Body of pancreas (tissue), 4 donors: ENCODE measurements at regions of chr18 and their contacts with region 1.

Region 1: DNA sequence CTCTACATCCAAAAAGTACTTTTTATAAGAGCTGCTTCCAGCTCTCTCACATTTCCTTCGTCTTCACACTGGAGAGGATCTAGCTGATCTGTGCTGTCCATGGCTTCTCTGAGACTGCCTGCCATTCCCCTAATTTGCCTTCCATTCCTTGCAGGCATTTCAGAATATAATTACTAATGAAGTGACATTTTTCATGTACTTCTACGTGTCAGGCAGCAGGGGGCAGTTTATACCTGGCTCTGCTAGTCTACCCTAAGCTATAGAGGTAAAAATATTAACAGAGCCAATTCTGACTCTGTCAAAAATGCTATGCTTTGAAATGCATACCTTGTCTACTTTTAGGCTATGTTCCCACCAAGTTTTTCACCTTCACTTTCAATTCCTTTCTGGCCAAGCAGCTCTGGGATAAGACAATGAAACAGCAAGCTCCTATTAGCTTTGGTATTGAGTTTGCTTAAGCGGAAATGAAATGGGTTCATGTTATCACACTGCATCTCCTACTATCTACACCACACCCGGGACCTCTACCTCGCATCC is 81.9 kb downstream of the MEP1B start:
- DNase-seq: peak in 3 of 4 donors; percentile 18 to 53 (median 29)
- ATAC-seq: peak; percentile 87
- H3K4me3 ChIP-seq: no peak overlapping the region
- H3K27ac ChIP-seq: no peak overlapping the region
- H3K4me1 ChIP-seq: no peaks in the 10 kb centered on the region
- H3K27me3 ChIP-seq: no peaks in the 10 kb centered on the region
- CTCF ChIP-seq: peak; percentile 19 to 90 (median 75)
- POLR2A ChIP-seq: no peak

Region 2: DNA sequence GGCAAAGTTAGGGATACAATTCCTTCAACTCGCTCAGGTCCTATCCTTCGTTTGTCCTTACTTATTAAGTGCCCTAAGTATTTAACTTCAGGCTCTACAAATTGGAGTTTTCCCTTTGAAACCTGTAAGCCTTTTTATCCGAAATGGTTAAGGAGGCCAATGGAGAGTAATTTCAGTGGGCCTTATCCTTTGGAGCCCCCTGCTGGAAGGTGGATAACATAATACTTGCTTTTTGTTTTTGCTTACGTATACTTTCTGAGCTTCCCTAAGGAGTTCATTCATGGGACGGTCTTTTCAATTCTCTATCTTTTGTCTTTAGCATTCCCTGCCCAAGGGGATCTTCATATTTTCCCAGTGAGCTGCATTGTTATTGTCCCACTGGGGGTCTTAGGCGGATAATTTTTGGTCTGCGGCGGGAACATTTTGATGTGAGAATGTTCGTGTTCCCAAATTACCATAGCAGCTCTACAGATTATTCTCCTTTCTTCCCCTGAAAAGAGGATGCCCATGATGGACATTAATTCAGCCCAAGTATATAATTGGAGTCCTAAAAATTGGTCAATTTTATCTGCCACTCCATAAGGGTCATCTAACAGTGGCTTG is 294.4 kb before region 1 on chr18:
- intact Hi-C with region 1: no loop called
- DNase-seq: peak; percentile 18 to 45 (median 44)
- ATAC-seq: peak; percentile 71
- H3K4me3 ChIP-seq: no peak overlapping the region
- H3K27ac ChIP-seq: no peak overlapping the region
- H3K4me1 ChIP-seq: no peaks in the 10 kb centered on the region
- H3K27me3 ChIP-seq: no peaks in the 10 kb centered on the region
- CTCF ChIP-seq: peak in 6 of 7 experiments; percentile 44 to 74 (median 64)
- POLR2A ChIP-seq: no peak

Region 3: GRCh38 chr18:32470713-32471633 is 199.2 kb after region 1 on chr18 and contains the start of gene GAREM1:
- intact Hi-C with region 1: loop called (anchors 10 kb)
- DNase-seq: peak; percentile 97 to 98 (median 98)
- ATAC-seq: peak; percentile 92
- H3K4me3 ChIP-seq: peak within 1 kb of the TSS; percentile 77 to 91
- H3K27ac ChIP-seq: peak within 1 kb of the TSS; percentile 91 to 95 (median 92)
- H3K4me1 ChIP-seq: peaks cover 31% of the 10 kb centered on the region
- H3K27me3 ChIP-seq: no peaks in the 10 kb centered on the region
- CTCF ChIP-seq: peak; percentile 57 to 99 (median 71)
- POLR2A ChIP-seq: peak; percentile 94 to 99 (median 96)
- total RNA-seq, gene GAREM1: 16.1 to 16.8 TPM

Region 4: DNA sequence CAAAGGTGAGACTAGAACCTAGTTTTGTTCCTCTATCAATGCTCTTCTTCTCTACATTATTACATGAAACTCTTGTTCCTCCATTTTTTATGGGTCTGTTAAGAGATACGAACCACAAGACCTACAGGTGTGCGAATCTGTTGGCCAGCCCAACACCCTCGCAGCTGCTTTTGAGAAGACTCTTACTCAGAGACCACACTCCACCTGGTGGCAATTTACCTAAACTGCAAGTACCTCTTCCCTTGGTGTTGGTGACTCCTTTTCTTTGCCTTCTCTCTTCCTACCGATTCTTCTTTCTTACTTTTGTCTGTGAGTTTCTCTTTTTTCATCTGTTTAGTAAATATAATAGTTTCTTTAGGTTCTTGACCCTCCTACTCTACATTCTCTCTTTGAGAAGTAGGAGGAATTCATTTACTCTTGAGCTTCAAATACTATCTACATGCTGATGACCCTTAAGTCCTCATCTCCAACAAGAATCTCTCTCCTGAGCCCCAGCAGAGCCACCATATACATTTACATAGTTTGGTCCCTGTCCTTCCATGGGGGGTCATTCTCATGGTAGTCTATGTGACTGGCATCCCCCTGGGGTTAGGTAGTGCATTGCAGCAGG is 280.8 kb after region 1 on chr18:
- intact Hi-C with region 1: loop called (anchors 5 kb)
- DNase-seq: peak; percentile 78 to 86 (median 84)
- ATAC-seq: peak; percentile 84
- H3K4me3 ChIP-seq: no peak overlapping the region
- H3K27ac ChIP-seq: no peak overlapping the region
- H3K4me1 ChIP-seq: no peaks in the 10 kb centered on the region
- H3K27me3 ChIP-seq: no peaks in the 10 kb centered on the region
- CTCF ChIP-seq: peak; percentile 64 to 93 (median 87)
- POLR2A ChIP-seq: no peak